Activated T-helper 1 cell treated with anti-CD3 and anti-CD28 coated beads, Interleukin-12 subunit alpha, Interleukin-12 subunit beta, Interleukin-2, Interleukin-4 antibody, amounts not matched to agents 30 ng/mL and 10 ng/mL and 1 ng/mL, durations not matched to agents 14 hours and 24 hours and 36 hours (primary cell): ENCODE measurements at regions of chr10 and their contacts with region 1.

Region 1: GRCh38 chr10:96891840-96892239 is 59.7 kb downstream of the LCOR start:
- DNase-seq: no peak
- H3K4me3 Mint-ChIP-seq: no peak overlapping the region
- H3K27ac Mint-ChIP-seq: peak overlapping the region; percentile 62
- H3K4me1 Mint-ChIP-seq: peaks cover 48% of the 10 kb centered on the region
- H3K27me3 Mint-ChIP-seq: no peaks in the 10 kb centered on the region

Region 2: DNA sequence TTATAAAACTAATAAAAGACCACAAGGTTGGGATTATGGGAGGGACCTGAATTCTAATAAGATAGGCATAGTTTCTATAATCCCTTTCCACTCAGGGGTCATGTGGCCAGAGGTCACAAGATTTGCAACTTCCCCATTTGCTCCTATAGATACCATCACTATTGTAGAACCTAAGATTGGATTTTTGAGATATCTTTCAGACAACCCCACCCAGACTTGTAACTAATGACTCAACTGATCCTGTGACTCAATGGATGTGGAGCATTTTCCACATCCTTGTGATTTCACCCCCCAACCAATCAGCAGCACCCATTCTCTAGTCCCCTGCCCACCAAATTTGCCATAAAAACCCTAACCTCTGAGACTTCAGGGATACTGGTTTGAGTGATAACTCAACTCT is 119.6 kb before region 1 on chr10:
- intact Hi-C with region 1: no loop called
- DNase-seq: no peak
- H3K4me3 Mint-ChIP-seq: no peak overlapping the region
- H3K27ac Mint-ChIP-seq: no peak overlapping the region
- H3K4me1 Mint-ChIP-seq: no peaks in the 10 kb centered on the region
- H3K27me3 Mint-ChIP-seq: peaks cover 11% of the 10 kb centered on the region

Region 3: GRCh38 chr10:96863922-96864543 is 27.8 kb before region 1 on chr10:
- intact Hi-C with region 1: loop called (anchors 1 kb)
- DNase-seq: no peak
- H3K4me3 Mint-ChIP-seq: no peak overlapping the region
- H3K27ac Mint-ChIP-seq: peak overlapping the region; percentile 70
- H3K4me1 Mint-ChIP-seq: peaks cover 20% of the 10 kb centered on the region
- H3K27me3 Mint-ChIP-seq: no peaks in the 10 kb centered on the region

Region 4: DNA sequence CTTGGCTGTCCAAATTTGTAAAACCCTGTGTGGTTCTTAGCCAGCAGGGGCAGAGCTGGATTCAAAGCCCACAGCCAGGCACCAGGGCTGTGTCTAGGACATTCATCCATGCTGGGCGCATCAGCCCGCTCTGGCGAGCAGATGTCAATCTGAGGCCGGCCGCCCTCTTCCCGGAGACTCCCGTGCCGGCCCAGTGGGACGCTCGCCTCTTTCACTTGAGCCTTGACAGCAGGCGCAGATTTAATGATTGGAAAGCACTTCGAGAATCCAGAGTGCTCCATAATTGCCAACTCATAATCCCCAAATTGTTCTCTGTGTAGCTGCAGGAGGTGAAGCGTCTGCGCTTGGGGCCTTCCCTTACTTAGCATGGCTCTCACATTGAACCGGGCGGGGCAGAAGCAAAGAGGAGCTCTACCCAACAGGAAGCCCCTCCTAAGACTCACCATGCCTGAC is 257.3 kb after region 1 on chr10:
- intact Hi-C with region 1: no loop called
- DNase-seq: no peak
- H3K4me3 Mint-ChIP-seq: no peak overlapping the region
- H3K27ac Mint-ChIP-seq: no peak overlapping the region
- H3K4me1 Mint-ChIP-seq: no peaks in the 10 kb centered on the region
- H3K27me3 Mint-ChIP-seq: peaks cover 2% of the 10 kb centered on the region